ENCODE measurements at regions of chr12 and their contacts with region 1.

Region 1: DNA sequence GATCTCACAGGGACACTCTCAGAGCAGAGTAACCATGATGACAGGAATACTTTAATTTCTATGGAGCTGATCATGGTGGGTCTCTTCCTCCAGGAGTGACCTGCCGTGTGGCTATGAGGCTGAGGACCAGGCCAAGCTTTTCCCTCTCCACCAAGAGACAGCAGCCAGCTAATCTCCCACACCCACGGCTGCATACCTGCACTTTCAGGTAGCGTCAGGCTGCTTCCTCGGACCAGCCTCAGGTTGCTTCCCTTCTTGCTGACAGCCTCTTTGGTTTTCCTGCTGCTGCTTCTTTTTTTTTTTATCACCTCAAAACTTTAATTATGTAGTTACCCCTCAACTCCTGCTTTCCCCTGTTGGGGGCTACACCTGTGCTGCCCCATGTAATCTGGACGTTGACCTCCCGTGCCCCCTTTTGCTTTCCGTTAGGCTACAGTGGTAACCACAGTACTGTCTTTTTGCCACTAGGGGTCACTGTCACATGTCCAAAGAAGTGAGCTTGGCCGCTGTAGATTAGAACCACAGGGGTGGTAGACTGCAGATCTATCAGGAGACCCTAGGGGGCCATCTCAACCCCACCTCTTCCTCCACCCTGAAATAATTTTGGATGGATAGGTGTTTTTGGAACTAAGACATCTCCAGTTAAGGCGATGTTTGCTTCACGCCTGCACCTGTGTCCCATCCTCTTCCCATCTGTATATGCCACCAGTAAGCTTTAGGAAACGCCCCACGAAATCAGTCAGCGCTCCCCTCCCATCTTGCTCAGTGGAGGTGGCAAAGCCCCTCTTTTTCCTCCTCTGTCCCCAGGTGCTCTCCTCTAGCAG is 7.8 kb upstream of the PIP4K2C start:
- DNase-seq: peak; percentile 83
- H3K27ac ChIP-seq: no peak overlapping the region
- CTCF ChIP-seq: peak; percentile 92

Region 2: GRCh38 chr12:57571926-57572762 is 11.1 kb before region 1 on chr12:
- CTCF ChIA-PET with region 1: interaction called, 14 read pairs
- POLR2A ChIA-PET with region 1: no interaction called
- DNase-seq: no peak
- H3K27ac ChIP-seq: no peak overlapping the region
- CTCF ChIP-seq: no peak

Region 3: DNA sequence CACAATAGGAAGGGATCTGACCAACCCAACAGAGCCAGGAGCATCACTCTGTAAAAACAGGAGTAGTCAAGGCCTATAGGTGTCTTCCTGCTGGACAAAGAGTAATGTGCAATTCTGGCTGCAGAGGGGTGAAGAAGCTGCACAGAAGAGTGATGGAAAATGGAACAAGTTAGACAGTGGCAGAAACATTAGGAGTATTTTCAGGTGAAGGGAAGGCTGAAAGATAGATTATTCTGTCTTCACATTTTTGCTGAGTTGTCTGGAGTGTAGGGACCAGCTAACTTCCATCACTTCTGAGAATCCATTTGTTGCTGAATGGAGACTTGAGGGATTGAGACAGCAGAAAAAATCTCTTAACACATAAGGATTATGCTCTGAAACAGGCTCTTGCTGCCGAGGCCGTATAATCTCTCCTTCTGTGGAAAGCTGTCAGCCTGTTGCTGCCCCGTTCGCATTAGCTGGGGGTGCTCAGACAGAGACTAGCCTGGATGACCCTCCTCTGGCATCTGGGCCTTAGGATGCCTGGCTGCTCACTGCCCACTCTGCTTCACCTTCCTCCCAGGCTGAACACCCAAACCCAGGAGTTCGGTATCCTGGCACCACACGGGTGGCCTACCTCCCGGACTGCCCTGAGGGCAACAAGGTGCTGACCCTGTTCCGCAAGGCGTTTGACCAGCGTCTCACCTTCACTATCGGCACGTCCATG is 24.9 kb after region 1 on chr12:
- CTCF ChIA-PET with region 1: interaction called, 14 read pairs
- POLR2A ChIA-PET with region 1: no interaction called
- DNase-seq: no peak
- H3K27ac ChIP-seq: peak overlapping the region; percentile 43
- CTCF ChIP-seq: no peak

Region 4: GRCh38 chr12:57621497-57622292 is 38.5 kb after region 1 on chr12:
- CTCF ChIA-PET with region 1: interaction called, 32 read pairs
- POLR2A ChIA-PET with region 1: no interaction called
- DNase-seq: peak; percentile 61
- H3K27ac ChIP-seq: no peak overlapping the region
- CTCF ChIP-seq: peak; percentile 93

Region 5: DNA sequence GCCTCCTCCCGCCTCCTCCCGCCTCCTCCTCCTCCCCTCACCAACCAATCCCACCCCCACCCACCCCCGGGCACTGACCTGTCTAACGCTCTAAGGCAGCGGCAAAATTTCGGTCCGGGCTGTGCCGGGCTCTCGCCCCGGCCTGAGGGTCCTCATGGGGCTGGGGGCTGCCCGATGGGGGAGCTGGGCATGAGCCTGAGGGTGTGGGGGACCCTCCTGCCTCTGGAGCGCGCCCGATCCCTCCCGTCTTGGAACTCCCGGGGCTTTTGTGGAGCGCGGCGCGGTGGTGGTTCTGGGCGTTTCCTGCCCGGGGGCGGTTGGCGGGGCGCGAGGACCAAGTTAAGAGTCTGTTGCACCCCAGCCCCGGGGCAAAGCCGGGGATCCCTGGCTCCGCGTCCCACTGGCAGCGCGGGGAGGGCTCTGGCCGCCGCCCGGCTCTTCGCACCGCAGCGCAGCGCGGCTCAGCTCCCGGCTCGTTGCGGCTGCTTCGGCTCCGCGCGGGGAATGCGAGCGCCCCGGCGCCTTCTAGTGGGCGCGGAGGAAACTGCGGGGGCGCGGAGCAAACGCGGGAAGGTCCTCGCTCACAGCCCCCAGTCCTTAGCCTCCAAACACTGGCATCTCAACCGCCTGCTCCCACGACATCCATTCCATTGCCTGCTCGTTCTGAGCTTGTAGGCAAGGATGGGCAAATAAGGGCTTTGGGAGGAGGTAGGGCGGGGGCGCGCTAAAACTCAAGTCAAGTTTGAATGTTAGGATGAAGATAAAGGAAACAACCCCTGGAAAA is 49.7 kb after region 1 on chr12 and contains the start of gene B4GALNT1:
- CTCF ChIA-PET with region 1: interaction called, 16 read pairs
- POLR2A ChIA-PET with region 1: no interaction called
- DNase-seq: peak; percentile 69
- H3K27ac ChIP-seq: peak within 1 kb of the TSS; percentile 44
- CTCF ChIP-seq: peak; percentile 96

Region 6: DNA sequence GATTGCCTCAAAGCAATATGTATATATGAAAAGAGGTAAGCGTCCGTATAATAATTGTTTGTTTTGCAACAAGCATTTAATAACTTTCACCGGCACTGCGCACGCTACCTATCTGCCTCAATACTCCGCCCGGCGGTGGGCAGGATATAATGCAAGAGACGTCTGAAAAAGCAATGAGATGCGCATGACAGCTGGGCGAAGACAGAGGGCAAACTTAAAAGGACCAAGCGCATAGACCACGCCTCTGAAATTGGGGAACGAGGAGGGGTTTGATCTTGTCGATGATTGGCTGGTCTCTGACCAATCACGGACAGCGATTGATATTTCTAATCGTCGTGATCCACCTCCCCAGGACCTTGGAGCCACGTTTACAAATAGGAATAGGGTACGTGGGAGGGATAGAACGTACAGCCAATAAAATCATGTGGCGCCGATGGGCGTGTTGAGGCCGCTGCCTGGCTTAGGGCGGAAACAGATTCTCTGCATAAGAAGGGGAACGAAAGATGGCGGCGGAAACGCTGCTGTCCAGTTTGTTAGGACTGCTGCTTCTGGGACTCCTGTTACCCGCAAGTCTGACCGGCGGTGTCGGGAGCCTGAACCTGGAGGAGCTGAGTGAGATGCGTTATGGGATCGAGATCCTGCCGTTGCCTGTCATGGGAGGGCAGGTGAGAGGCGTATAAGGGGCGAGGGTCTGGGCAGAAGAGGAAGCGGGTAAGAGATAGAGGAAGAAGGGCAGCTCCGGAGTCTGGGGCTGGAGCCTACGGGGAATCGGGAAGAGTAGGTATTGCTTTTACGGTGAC is 110.6 kb after region 1 on chr12 and contains the start of gene OS9:
- CTCF ChIA-PET with region 1: interaction called, 17 read pairs
- POLR2A ChIA-PET with region 1: no interaction called
- DNase-seq: peak; percentile 100
- H3K27ac ChIP-seq: peak within 1 kb of the TSS; percentile 66
- CTCF ChIP-seq: peak; percentile 88

Measured in RWPE1 (cell line).